GM12878 (cell line): ENCODE measurements at regions of chrX and their contacts with region 1.

Region 1: DNA sequence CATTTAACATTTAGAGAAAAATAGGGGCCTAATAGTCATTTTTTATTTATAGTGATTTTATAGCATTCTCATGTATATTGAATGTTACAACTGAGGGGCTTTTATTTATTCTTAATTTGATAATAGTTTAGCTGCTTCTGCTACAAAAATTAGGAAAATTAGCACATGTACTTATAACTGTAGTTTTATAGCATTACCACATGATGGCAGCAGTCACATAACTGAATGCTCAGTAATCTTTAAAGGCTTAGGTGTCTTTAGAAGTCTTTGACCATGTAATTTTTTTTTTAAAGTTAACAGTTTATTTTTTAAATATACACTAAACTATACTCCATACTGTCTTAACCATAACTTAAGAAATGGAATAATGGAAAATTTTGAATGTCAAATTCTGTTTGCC is 136.6 kb downstream of the STAG2 start:
- DNase-seq: no peak
- ATAC-seq: peak; percentile 65
- H3K4me3 ChIP-seq: no peak overlapping the region
- H3K27ac ChIP-seq: no peak overlapping the region
- H3K4me1 ChIP-seq: no peaks in the 10 kb centered on the region
- H3K27me3 ChIP-seq: no peaks in the 10 kb centered on the region
- CTCF ChIP-seq: peak; percentile 36 to 50 (median 42); a peak in 4 of 6 replicates
- EP300 ChIP-seq: no peak
- POLR2A ChIP-seq: no peak
- RAD21 ChIP-seq: peak; percentile 47

Region 2: GRCh38 chrX:124086411-124086810 is 11.7 kb before region 1 on chrX:
- CTCF ChIA-PET with region 1: interaction called, 12 read pairs
- POLR2A ChIA-PET with region 1: no interaction called
- RAD21 ChIA-PET with region 1: no interaction called
- SMC1A ChIA-PET with region 1: interaction called, 4 read pairs
- in situ Hi-C with region 1: no loop called
- intact Hi-C with region 1: no loop called
- DNase-seq: no peak
- ATAC-seq: no peak
- H3K4me3 ChIP-seq: no peak overlapping the region
- H3K27ac ChIP-seq: no peak overlapping the region
- H3K4me1 ChIP-seq: no peaks in the 10 kb centered on the region
- H3K27me3 ChIP-seq: no peaks in the 10 kb centered on the region
- CTCF ChIP-seq: no peak
- EP300 ChIP-seq: no peak
- POLR2A ChIP-seq: no peak
- RAD21 ChIP-seq: no peak

Region 3: GRCh38 chrX:124232523-124233201 is 134.6 kb after region 1 on chrX:
- CTCF ChIA-PET with region 1: no interaction called
- POLR2A ChIA-PET with region 1: no interaction called
- RAD21 ChIA-PET with region 1: no interaction called
- SMC1A ChIA-PET with region 1: no interaction called
- in situ Hi-C with region 1: no loop called
- intact Hi-C with region 1: no loop called
- DNase-seq: no peak
- ATAC-seq: peak; percentile 82
- H3K4me3 ChIP-seq: no peak overlapping the region
- H3K27ac ChIP-seq: no peak overlapping the region
- H3K4me1 ChIP-seq: peaks cover 4% of the 10 kb centered on the region; the same call in 1 of the 2 replicates
- H3K27me3 ChIP-seq: no peaks in the 10 kb centered on the region
- CTCF ChIP-seq: no peak
- EP300 ChIP-seq: no peak
- POLR2A ChIP-seq: no peak
- RAD21 ChIP-seq: no peak